Activated CD4-positive, alpha-beta memory T cell treated with anti-CD3 and anti-CD28 coated beads for 36 hours (primary cell): ENCODE measurements at regions of chr9 and their contacts with region 1.

Region 1: GRCh38 chr9:115591584-115591984 is 473.6 kb upstream of the TNC start:
- DNase-seq: peak; percentile 13
- H3K4me3 Mint-ChIP-seq: no peak overlapping the region
- H3K27ac Mint-ChIP-seq: no peak overlapping the region
- H3K4me1 Mint-ChIP-seq: no peaks in the 10 kb centered on the region
- H3K27me3 Mint-ChIP-seq: peaks cover 7% of the 10 kb centered on the region

Region 2: GRCh38 chr9:115553060-115553773 is 38.4 kb before region 1 on chr9:
- CTCF ChIA-PET with region 1: no interaction called
- POLR2A ChIA-PET with region 1: no interaction called
- intact Hi-C with region 1: no loop called
- DNase-seq: no peak
- H3K4me3 Mint-ChIP-seq: no peak overlapping the region
- H3K27ac Mint-ChIP-seq: no peak overlapping the region
- H3K4me1 Mint-ChIP-seq: no peaks in the 10 kb centered on the region
- H3K27me3 Mint-ChIP-seq: peaks cover 4% of the 10 kb centered on the region

Region 3: GRCh38 chr9:115604831-115605483 is 13.4 kb after region 1 on chr9:
- CTCF ChIA-PET with region 1: interaction called, 20 read pairs
- POLR2A ChIA-PET with region 1: no interaction called
- intact Hi-C with region 1: no loop called
- DNase-seq: no peak
- H3K4me3 Mint-ChIP-seq: no peak overlapping the region
- H3K27ac Mint-ChIP-seq: no peak overlapping the region
- H3K4me1 Mint-ChIP-seq: no peaks in the 10 kb centered on the region
- H3K27me3 Mint-ChIP-seq: peaks cover 8% of the 10 kb centered on the region

Region 4: DNA sequence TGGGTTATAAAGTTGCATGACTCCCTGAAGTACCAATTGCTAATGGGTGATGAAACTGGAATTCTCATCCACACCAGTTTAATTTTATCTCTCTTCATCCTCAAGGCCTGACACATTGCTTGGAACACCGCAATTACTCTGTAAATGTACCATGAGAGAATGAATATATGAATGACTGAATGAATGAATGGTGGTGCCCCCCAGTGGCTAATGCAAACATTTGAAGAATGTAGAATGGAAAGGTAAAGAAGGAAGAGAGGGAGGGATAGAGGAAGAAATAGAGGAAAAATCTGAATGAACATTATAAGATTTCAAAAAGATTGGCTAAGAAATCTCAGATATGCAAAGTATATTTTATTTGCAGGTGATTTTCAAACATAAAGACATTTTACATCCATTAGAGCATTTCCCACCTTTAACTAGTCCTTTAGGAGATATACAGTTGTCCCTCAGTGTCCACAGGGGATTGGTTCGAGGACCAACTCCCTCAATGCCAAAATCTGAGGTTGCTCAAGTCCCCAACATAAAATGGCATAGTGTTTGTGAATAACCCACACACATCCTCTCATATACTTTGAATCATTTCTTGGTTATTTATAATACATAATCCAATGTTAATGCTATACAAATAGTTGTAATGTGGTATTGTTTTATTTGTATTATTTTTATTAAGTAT is 575.3 kb after region 1 on chr9:
- CTCF ChIA-PET with region 1: no interaction called
- POLR2A ChIA-PET with region 1: no interaction called
- intact Hi-C with region 1: loop called (anchors 5 kb)
- DNase-seq: no peak
- H3K4me3 Mint-ChIP-seq: no peak overlapping the region
- H3K27ac Mint-ChIP-seq: no peak overlapping the region
- H3K4me1 Mint-ChIP-seq: no peaks in the 10 kb centered on the region
- H3K27me3 Mint-ChIP-seq: no peaks in the 10 kb centered on the region

Region 5: DNA sequence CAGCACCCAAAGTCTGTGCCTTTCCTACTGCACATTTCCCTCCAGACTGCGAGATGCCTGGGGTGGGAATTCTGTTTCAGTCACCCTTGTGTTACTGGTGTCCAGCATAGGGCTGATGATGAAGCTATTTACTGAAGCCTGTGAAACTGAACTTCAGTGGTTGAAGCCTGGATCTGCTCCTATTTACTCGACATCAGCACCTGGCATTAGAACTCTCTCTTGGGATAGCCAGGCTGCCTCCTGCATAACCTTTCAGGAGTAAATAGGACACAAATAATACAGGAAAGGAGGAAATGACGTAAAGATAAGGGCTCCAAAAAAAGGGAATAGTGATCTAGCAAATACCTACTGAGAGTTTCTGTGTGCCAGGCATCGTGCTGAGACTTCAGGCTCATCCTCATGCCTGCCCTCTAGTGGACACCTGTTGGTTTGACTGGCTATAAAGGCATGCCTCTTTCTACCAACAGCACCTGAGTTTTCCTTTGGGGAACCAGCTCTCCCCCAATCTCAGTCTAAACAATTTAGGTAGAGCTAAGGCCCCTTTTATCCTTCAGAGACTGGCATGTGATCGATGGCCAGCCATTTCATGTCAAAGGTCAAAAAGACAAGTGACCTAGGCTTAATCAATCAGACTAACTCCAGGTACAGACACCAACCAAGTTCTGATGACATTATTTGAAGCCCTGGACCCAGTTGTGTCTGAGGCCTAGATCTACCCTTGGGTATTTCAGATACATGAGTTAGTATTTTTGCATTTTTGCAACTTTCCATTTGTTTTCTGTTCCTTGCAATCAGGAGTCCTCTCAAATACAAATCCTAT is 903.4 kb after region 1 on chr9:
- CTCF ChIA-PET with region 1: interaction called, 6 read pairs
- POLR2A ChIA-PET with region 1: no interaction called
- intact Hi-C with region 1: loop called (anchors 5 kb)
- DNase-seq: peak; percentile 44
- H3K4me3 Mint-ChIP-seq: no peak overlapping the region
- H3K27ac Mint-ChIP-seq: no peak overlapping the region
- H3K4me1 Mint-ChIP-seq: no peaks in the 10 kb centered on the region
- H3K27me3 Mint-ChIP-seq: no peaks in the 10 kb centered on the region

Region 6: DNA sequence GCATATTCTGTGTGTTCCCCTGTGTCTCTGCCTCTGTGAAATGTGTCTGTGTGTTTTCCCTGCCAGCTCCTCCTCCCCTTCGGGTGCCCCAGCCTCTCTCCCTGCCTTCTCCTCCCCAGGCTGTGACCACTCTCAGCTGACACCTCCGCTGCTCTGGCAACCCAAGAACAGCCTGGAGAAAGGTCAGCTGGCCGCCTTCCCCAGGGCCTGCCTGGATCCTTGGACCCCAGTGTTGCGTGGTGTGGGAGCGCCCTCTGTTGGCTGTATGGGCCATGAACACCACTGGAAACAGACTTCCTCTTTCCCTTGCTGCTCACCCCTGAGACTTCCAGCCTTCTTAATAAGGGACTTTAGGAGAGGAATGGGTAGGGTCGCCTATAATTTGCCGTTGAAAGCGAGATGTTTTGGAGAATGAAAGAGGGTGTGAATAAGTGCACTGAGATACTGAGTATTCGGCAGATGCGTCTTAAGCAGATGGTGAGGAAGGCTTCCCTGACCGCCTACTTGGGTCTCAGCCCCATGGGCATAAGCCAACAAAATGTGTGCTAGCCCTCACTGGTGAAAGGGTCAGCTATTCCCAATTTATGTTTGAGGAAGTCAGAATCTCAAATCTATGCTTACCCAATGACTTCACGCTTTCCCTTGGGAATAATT is 980.6 kb after region 1 on chr9:
- CTCF ChIA-PET with region 1: interaction called, 12 read pairs
- POLR2A ChIA-PET with region 1: no interaction called
- intact Hi-C with region 1: loop called (anchors 5 kb)
- DNase-seq: peak; percentile 47
- H3K4me3 Mint-ChIP-seq: no peak overlapping the region
- H3K27ac Mint-ChIP-seq: no peak overlapping the region
- H3K4me1 Mint-ChIP-seq: no peaks in the 10 kb centered on the region
- H3K27me3 Mint-ChIP-seq: no peaks in the 10 kb centered on the region

Region 7: GRCh38 chr9:116661037-116661954 is 1069.7 kb after region 1 on chr9:
- CTCF ChIA-PET with region 1: interaction called, 7 read pairs
- POLR2A ChIA-PET with region 1: no interaction called
- intact Hi-C with region 1: loop called (anchors 1 kb)
- DNase-seq: no peak
- H3K4me3 Mint-ChIP-seq: no peak overlapping the region
- H3K27ac Mint-ChIP-seq: no peak overlapping the region
- H3K4me1 Mint-ChIP-seq: no peaks in the 10 kb centered on the region
- H3K27me3 Mint-ChIP-seq: no peaks in the 10 kb centered on the region